Breast epithelium (tissue), 4 donors: ENCODE measurements at regions of chr2 and their contacts with region 1.

Region 1: GRCh38 chr2:3864943-3865865 is 161.8 kb downstream of the DCDC2C start:
- DNase-seq: no peak
- H3K4me3 ChIP-seq: no peak overlapping the region
- H3K27ac ChIP-seq: no peak overlapping the region
- H3K4me1 ChIP-seq: no peaks in the 10 kb centered on the region
- H3K27me3 ChIP-seq: peaks cover 0 to 6% of the 10 kb centered on the region in 2 donors
- CTCF ChIP-seq: no peak
- POLR2A ChIP-seq: no peak

Region 2: GRCh38 chr2:3839476-3839875 is 25.7 kb before region 1 on chr2:
- intact Hi-C with region 1: no loop called
- DNase-seq: no peak
- H3K4me3 ChIP-seq: no peak overlapping the region
- H3K27ac ChIP-seq: no peak overlapping the region
- H3K4me1 ChIP-seq: no peaks in the 10 kb centered on the region
- H3K27me3 ChIP-seq: no peaks in the 10 kb centered on the region
- CTCF ChIP-seq: no peak
- POLR2A ChIP-seq: no peak

Region 3: GRCh38 chr2:3876685-3877084 is 11.5 kb after region 1 on chr2:
- intact Hi-C with region 1: no loop called
- DNase-seq: no peak
- H3K4me3 ChIP-seq: no peak overlapping the region
- H3K27ac ChIP-seq: no peak overlapping the region
- H3K4me1 ChIP-seq: no peaks in the 10 kb centered on the region
- H3K27me3 ChIP-seq: peaks cover 0 to 20% of the 10 kb centered on the region in 2 donors
- CTCF ChIP-seq: no peak
- POLR2A ChIP-seq: no peak

Region 4: DNA sequence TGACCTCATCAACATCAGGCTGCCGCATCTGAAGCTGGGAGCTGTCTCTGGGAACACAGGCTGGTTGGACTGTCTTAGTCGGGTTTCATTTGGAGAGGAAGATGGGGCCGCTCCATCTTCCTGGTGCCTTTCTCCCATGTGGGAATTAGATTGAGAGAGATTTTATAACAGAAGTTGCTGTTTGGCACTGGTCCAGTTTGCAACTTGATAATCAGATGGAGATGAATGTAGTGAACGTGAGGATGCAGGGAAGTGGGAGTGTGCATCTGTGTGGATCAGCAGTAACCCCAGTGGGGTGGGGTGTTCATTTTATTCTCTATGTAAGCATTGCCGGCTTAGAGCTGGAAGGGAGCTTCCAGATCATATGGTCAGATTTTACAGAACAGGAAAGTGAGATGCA is 89.1 kb after region 1 on chr2:
- intact Hi-C with region 1: no loop called
- DNase-seq: no peak
- H3K4me3 ChIP-seq: no peak overlapping the region
- H3K27ac ChIP-seq: no peak overlapping the region
- H3K4me1 ChIP-seq: no peaks in the 10 kb centered on the region
- H3K27me3 ChIP-seq: no peaks in the 10 kb centered on the region
- CTCF ChIP-seq: no peak
- POLR2A ChIP-seq: no peak

Region 5: DNA sequence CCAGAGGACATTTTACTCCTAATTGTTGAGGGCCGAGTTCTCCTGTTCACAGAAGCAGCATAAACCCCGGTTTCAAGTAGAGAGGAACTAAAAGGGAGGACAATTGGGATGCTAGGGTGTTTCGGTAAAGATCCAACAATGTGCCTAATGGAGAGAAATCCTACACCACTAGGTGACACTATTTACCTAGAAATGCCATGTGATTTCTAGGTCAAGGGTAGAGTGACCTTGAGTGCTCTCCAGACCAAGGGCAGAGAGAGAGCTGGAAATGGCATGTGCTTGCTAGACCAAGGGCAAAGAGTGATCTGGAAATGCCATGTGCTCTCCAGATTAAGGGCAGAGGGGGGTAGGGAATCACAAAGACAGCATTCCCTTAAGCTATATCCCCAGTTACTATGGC is 310.1 kb after region 1 on chr2:
- intact Hi-C with region 1: loop called (anchors 5 kb)
- DNase-seq: no peak
- H3K4me3 ChIP-seq: no peak overlapping the region
- H3K27ac ChIP-seq: no peak overlapping the region
- H3K4me1 ChIP-seq: no peaks in the 10 kb centered on the region
- H3K27me3 ChIP-seq: no peaks in the 10 kb centered on the region
- CTCF ChIP-seq: no peak
- POLR2A ChIP-seq: no peak